HCT116 (cell line): ENCODE measurements at regions of chr4 and their contacts with region 1.

Region 1: DNA sequence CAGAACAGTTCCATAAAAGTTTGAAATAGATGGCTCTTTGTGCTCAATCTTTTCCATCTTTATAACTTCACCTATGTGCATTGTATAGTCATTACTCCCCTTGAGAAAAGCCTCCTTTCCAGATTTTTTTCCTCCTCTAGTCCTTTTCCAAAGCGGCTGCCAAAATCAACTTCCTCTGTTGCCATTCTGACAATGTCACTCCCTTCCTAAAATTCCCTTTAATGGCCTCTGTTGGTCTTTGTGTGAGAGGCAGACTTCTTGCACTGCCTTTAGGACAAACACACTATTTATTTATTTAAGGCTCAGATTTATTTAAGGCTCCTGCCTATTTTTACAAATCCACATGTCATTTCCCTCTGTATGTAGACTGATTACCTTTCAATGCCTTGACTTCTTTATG is 21.7 kb upstream of the FRYL start:
- DNase-seq: no peak
- ATAC-seq: no peak
- H3K4me3 ChIP-seq: no peak overlapping the region
- H3K27ac ChIP-seq: no peak overlapping the region; the same call in 1 of the 2 replicates
- H3K4me1 ChIP-seq: peaks cover 8 to 15% of the 10 kb centered on the region in 2 experiments; a peak in 3 of 4 replicates
- H3K27me3 ChIP-seq: no peaks in the 10 kb centered on the region
- CTCF ChIP-seq: no peak
- POLR2A ChIP-seq: no peak
- RAD21 ChIP-seq: no peak

Region 2: DNA sequence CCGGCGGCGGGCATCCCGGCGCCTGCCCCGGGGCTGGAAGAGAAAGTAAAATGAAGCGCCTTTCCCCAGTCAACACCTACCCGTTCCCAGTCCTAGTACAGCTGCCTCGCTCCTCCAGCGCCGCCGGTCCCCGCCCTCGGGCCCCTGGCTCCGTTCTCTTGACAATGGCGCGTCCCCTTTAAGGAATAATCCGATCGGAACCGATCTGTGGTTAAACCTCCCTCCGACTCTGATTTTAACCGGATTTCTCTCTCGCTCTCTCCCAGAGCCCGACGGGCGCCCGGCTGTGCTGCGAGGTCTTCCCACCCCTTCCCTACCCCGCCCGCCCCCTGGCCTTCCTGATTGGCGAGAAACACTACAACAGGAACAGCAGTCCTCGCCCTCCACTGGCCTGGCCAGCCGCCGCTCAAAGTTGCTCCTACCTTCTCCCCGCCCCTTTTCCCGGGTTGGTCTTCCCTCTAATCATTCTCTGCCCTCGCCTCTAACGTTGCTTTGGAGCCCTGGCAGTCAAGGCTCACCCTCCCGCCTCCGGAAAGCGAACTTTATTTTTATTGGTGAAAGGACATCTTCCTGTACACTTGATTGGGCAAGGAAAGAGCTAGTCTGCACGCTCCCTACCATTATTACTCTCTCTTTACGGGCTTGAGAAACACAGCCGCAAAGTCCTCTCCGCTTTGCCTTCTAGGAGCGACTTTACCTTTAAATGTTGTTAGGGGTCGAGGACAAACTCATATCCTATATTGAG is 21.6 kb before region 1 on chr4 and contains the start of gene FRYL:
- CTCF ChIA-PET with region 1: no interaction called
- POLR2A ChIA-PET with region 1: interaction called, 10 read pairs
- RAD21 ChIA-PET with region 1: no interaction called
- intact Hi-C with region 1: no loop called
- DNase-seq: peak; percentile 99
- ATAC-seq: peak; percentile 93
- H3K4me3 ChIP-seq: peak within 1 kb of the TSS; percentile 68 to 71
- H3K27ac ChIP-seq: peak within 1 kb of the TSS; percentile 86
- H3K4me1 ChIP-seq: peaks cover 8 to 24% of the 10 kb centered on the region in 2 experiments
- H3K27me3 ChIP-seq: no peaks in the 10 kb centered on the region
- CTCF ChIP-seq: no peak
- POLR2A ChIP-seq: peak; percentile 75
- RAD21 ChIP-seq: no peak
- total RNA-seq, gene FRYL: 47.7 TPM